ENCODE measurements at regions of chr11 and their contacts with region 1.

Region 1: DNA sequence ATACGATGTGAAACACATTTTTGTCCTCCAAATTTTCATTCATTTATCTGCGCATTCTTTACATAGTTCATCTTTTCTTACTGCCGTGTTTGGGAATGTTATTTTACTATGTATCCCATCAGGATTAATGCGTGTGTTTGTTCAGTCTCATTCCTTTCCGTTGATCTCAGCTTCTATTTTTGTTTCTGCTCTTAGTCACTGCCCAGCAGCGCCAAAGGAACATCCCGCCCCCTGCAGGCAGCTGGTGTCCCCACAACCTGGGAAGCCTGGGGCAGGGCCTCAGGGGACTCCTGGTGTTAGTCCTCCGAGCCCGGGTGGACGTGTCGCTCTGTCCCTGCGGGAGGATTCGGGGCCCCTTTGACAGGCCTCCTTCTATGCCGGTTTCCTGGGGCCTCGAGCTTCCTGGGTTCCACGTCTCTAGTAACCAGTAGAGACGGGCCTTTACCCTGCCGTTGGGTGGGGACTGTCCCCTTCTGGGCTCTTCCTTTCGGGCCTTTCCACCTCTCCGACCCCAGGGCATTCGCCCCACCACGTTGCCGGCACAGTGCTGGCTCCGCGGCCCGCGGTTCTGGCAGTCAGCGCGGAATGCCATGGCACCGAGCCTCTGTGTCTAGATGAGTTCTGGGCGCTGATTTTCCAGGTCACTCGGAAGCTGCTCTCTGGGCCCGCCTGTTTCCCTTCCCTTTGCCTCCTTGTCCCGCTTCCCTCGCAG is 39.8 kb downstream of the WEE1 start:
- DNase-seq: peak; percentile 99
- H3K4me3 ChIP-seq: peak overlapping the region; percentile 51 to 63 (median 61)
- H3K27ac ChIP-seq: peak overlapping the region; percentile 92 to 99 (median 96)
- H3K4me1 ChIP-seq: peaks cover 17 to 35% (median 32%) of the 10 kb centered on the region in 4 donors
- H3K27me3 ChIP-seq: no peaks in the 10 kb centered on the region
- CTCF ChIP-seq: peak in 2 of 3 experiments; percentile 96 to 99
- EP300 ChIP-seq: no peak
- POLR2A ChIP-seq: no peak

Region 2: GRCh38 chr11:9534791-9535781 is 78.2 kb before region 1 on chr11:
- intact Hi-C with region 1: loop called (anchors 5 kb)
- DNase-seq: peak; percentile 96
- H3K4me3 ChIP-seq: no peak overlapping the region
- H3K27ac ChIP-seq: peak overlapping the region; percentile 66 to 75 (median 74)
- H3K4me1 ChIP-seq: peaks cover 6 to 32% (median 28%) of the 10 kb centered on the region in 4 donors
- H3K27me3 ChIP-seq: no peaks in the 10 kb centered on the region
- CTCF ChIP-seq: peak; percentile 71 to 81 (median 77)
- EP300 ChIP-seq: no peak
- POLR2A ChIP-seq: no peak

Region 3: DNA sequence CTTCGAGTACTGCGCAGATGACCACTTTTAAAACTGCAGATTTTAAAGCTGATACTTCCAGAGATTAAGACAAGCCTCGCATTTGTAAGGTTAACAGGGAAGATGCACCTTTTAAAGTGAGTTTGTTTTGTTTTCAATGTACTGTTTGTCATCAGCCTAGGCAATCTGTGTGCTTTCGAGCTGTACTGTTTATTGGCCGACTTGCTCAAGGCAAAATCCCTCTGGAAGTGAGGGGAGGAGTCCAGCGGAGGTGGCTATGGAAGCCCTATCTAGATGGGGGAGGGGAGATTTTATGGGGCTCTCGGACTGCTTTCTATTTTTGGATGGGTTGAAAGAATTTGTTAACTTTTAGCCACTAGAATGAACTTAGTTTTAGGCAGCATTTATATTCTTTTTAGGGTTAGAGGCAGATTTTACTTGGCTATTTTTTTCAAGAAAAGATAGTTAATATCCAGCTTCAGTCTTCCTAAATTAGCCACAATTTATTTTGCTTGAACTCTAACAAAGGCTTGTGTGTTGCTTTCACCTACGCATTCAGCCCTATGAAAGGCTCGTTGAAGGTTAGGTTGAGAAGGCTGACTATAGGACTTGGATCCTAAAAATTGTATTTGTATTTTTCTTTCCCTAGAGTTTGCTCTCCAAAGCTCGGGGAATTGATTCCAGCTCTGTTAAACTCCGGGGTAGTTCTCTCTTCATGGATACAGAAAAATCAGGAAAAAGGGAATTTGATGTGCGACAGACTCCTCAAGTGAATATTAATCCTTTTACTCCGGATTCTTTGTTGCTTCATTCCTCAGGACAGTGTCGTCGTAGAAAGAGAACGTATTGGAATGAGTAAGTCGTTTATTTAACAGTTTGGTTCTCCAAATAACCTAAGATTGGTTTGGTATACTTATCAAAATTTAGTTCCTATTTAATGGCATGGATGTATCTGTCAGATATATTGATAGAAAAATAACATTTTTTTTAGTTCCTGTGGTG is 37.7 kb before region 1 on chr11:
- intact Hi-C with region 1: loop called (anchors 5 kb)
- DNase-seq: peak; percentile 93
- H3K4me3 ChIP-seq: peak overlapping the region; percentile 78 to 84 (median 81)
- H3K27ac ChIP-seq: peak overlapping the region; percentile 88 to 98 (median 96)
- H3K4me1 ChIP-seq: peaks cover 4 to 31% (median 27%) of the 10 kb centered on the region in 4 donors
- H3K27me3 ChIP-seq: no peaks in the 10 kb centered on the region
- CTCF ChIP-seq: no peak
- EP300 ChIP-seq: no peak
- POLR2A ChIP-seq: peak; percentile 43

Region 4: DNA sequence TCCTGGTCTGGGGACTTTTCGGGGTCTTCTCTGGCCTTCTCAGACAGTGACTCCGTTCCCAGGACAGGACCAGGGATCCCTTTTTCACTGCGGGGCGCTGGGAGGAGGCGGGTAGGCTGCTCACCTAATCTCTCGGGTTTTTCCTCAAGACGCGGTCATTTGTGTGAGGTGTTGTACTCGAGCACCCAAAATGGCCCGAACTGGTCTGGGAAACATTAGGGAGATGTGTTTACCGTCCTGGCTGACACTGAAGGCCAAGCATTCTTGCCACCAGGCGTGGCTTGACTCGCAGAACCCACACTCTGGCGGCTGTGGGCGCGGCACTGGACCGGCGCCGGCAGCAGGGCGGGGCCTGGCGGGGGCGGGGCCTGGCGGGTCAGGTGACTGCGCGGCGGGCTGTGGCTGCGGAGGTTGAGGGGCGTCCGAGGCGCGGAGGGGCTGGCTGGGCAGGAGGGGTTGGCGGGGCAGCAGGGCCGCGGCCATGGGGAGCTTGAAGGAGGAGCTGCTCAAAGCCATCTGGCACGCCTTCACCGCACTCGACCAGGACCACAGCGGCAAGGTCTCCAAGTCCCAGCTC is 50.5 kb after region 1 on chr11 and contains the start of gene SWAP70:
- intact Hi-C with region 1: loop called (anchors 5 kb)
- DNase-seq: peak; percentile 97
- H3K4me3 ChIP-seq: peak within 1 kb of the TSS; percentile 69 to 98 (median 88)
- H3K27ac ChIP-seq: peak within 1 kb of the TSS; percentile 93 to 98 (median 94)
- H3K4me1 ChIP-seq: peaks cover 6 to 27% (median 23%) of the 10 kb centered on the region in 4 donors
- H3K27me3 ChIP-seq: no peaks in the 10 kb centered on the region
- CTCF ChIP-seq: peak; percentile 52 to 73 (median 64)
- EP300 ChIP-seq: no peak
- POLR2A ChIP-seq: peak; percentile 32
- total RNA-seq, gene SWAP70: 37.8 to 54.9 (median 46.5) TPM

Region 5: DNA sequence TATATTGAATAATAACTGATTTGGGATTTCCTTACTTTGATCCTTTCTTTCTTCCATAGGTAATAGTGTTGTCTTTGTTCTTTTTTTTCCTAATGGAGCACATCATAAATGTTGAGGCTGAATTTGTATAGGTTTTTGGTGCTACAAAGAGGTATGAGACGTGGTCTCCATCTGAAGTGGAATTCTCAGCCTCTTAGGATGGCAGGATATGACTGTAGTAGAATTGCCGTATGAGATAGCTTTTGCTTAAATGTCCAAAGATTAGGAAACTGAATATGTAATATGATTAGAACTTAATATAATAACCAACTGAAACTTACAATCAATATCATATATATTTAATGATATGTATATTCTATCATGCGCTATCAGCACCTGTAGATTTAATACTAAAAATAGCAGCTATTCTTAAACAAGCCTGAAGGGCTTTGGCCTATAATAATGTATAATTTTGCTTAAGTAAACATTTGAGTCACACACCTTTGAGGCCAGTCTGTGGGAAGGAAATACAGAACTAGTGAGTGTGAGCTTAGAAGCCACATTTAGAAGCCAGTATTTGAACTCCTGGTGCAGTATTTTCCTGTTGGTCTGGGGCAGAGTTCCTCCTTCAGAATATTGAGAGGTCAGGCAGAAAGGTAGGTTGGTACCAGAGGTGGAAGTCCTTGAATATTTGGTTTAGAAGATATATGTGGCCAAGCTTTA is 113.2 kb after region 1 on chr11:
- intact Hi-C with region 1: loop called (anchors 5 kb)
- DNase-seq: no peak
- H3K4me3 ChIP-seq: no peak overlapping the region
- H3K27ac ChIP-seq: peak overlapping the region in 1 of 4 donors; percentile 2
- H3K4me1 ChIP-seq: peaks cover 5 to 14% (median 5%) of the 10 kb centered on the region in 4 donors
- H3K27me3 ChIP-seq: no peaks in the 10 kb centered on the region
- CTCF ChIP-seq: no peak
- EP300 ChIP-seq: no peak
- POLR2A ChIP-seq: no peak

Region 6: GRCh38 chr11:9748361-9748970 is 135.2 kb after region 1 on chr11:
- intact Hi-C with region 1: loop called (anchors 2 kb)
- DNase-seq: no peak
- H3K4me3 ChIP-seq: no peak overlapping the region
- H3K27ac ChIP-seq: peak overlapping the region; percentile 34 to 65 (median 53)
- H3K4me1 ChIP-seq: peaks cover 11 to 36% (median 28%) of the 10 kb centered on the region in 4 donors
- H3K27me3 ChIP-seq: no peaks in the 10 kb centered on the region
- CTCF ChIP-seq: peak; percentile 71 to 85 (median 80)
- EP300 ChIP-seq: no peak
- POLR2A ChIP-seq: no peak

Region 7: DNA sequence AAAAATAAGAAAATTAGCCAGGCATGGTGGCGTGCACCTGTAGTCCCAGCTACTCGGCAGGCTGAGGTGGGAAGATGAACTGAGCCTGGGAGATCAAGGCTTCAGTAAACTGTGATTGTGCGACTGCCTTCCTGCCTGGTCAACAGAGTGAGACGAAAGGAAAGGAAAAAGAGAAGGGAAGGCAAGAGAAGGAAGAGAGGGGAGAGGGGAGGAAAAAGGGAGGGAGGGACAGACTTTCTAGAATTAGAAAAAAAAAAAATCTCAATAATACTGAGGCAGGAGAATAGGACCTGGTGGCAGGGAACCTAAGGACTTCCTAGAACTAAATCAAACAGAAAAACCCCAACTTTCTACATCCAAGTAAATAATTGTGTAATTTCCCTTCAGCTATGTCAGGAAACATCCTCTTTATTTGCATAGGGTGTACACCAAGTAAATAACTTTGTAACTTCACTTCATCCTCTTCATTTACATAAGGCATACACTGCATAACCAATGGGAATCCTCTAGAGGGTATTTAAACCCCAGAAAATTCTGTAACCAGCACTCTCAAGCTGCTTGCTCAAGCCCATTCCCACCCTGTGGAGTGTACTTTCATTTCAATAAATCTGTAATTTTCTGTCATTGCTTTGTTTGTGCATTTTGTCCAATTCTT is 672.0 kb after region 1 on chr11:
- intact Hi-C with region 1: no loop called
- DNase-seq: no peak
- H3K4me3 ChIP-seq: no peak overlapping the region
- H3K27ac ChIP-seq: no peak overlapping the region
- H3K4me1 ChIP-seq: peaks cover 7 to 48% (median 42%) of the 10 kb centered on the region in 4 donors
- H3K27me3 ChIP-seq: no peaks in the 10 kb centered on the region
- CTCF ChIP-seq: no peak
- EP300 ChIP-seq: no peak
- POLR2A ChIP-seq: no peak